ENCODE measurements at regions of chr2 and their contacts with region 1.

Region 1: DNA sequence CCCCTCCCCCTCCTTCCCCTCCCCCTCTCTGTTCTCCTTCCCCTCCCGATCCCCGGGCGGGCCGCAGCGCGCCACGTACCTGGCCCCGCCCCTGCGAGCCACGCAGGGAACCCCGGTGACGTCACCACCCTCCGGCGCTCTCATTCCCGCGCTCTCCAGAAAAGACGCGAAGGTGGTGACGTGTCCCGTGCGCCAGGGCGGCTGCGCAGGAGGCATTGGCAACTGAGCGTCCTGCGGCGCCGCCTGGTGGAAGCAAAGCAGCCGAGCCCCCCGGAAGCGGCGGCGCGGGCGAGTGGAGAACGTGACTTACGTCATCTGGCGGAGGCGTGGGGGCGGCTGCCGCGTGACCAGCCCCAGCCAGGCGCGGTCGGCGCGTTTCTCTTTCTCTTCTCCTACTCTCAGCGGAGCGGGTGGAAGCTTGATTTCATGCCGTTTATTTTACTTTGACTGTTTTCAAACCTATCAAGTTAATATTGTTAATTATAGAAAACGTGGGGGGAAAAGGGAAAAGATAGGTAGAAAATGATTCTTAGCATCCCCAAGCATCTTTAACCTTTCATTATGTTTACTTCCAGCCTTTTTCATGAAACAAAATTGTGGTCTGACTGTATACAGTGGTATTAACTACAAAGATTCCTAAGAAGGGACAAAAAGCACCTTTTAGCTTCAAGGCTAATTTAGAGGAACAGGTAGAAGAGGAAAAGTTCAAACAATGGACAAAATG is 48.1 kb downstream of the C2orf42 start:
- DNase-seq: peak; percentile 100
- H3K4me3 Mint-ChIP-seq: peak overlapping the region; percentile 80
- H3K27ac Mint-ChIP-seq: peak overlapping the region; percentile 91
- H3K4me1 Mint-ChIP-seq: peaks cover 58% of the 10 kb centered on the region
- H3K27me3 Mint-ChIP-seq: no peaks in the 10 kb centered on the region

Region 2: GRCh38 chr2:69816923-69817542 is 325.7 kb before region 1 on chr2:
- intact Hi-C with region 1: loop called (anchors 1 kb)
- DNase-seq: peak; percentile 68
- H3K4me3 Mint-ChIP-seq: no peak overlapping the region
- H3K27ac Mint-ChIP-seq: no peak overlapping the region
- H3K4me1 Mint-ChIP-seq: peaks cover 13% of the 10 kb centered on the region
- H3K27me3 Mint-ChIP-seq: no peaks in the 10 kb centered on the region

Region 3: GRCh38 chr2:69946351-69947077 is 196.2 kb before region 1 on chr2:
- intact Hi-C with region 1: loop called (anchors 1 kb)
- DNase-seq: peak; percentile 66
- H3K4me3 Mint-ChIP-seq: peak overlapping the region; percentile 67
- H3K27ac Mint-ChIP-seq: peak overlapping the region; percentile 86
- H3K4me1 Mint-ChIP-seq: peaks cover 52% of the 10 kb centered on the region
- H3K27me3 Mint-ChIP-seq: peaks cover 5% of the 10 kb centered on the region

Region 4: GRCh38 chr2:70086838-70087701 is 55.7 kb before region 1 on chr2 and contains the start of gene PCBP1:
- intact Hi-C with region 1: loop called (anchors 1 kb)
- DNase-seq: peak; percentile 91
- H3K4me3 Mint-ChIP-seq: peak within 1 kb of the TSS; percentile 99
- H3K27ac Mint-ChIP-seq: peak within 1 kb of the TSS; percentile 100
- H3K4me1 Mint-ChIP-seq: peaks cover 56% of the 10 kb centered on the region
- H3K27me3 Mint-ChIP-seq: no peaks in the 10 kb centered on the region
- total RNA-seq, gene PCBP1: 426 and 427 TPM in 2 replicates

Region 5: DNA sequence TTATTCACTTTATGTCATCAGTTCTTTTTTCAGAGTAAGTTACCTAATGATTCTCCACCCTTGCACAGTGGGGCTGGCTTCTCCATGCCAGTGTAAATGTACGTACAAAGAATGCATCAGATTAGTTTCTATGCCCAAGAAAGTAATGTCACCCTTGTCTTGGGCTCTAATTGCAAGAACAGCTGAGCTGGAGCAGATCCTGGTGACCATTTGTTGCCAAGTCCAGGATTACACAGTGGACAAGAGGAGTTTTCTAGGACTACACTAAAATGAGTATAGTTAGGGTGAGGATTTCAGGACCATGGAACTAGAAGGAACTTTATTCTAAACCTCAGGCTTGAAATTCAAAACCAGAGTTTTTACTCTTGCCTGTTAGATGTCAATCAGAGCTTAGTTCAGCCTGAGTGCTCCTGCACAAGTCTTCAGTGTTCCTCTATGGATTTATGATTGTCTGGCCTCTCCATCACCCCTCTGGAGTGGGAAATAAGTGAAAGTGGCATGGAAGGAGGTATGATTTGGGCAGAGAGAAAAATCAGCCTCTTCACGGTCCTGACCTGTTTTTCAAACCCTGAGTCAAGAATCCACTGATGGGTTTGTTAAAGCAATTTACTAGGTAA is 25.7 kb before region 1 on chr2:
- intact Hi-C with region 1: no loop called
- DNase-seq: no peak
- H3K4me3 Mint-ChIP-seq: no peak overlapping the region
- H3K27ac Mint-ChIP-seq: no peak overlapping the region
- H3K4me1 Mint-ChIP-seq: peaks cover 37% of the 10 kb centered on the region
- H3K27me3 Mint-ChIP-seq: no peaks in the 10 kb centered on the region

Region 6: DNA sequence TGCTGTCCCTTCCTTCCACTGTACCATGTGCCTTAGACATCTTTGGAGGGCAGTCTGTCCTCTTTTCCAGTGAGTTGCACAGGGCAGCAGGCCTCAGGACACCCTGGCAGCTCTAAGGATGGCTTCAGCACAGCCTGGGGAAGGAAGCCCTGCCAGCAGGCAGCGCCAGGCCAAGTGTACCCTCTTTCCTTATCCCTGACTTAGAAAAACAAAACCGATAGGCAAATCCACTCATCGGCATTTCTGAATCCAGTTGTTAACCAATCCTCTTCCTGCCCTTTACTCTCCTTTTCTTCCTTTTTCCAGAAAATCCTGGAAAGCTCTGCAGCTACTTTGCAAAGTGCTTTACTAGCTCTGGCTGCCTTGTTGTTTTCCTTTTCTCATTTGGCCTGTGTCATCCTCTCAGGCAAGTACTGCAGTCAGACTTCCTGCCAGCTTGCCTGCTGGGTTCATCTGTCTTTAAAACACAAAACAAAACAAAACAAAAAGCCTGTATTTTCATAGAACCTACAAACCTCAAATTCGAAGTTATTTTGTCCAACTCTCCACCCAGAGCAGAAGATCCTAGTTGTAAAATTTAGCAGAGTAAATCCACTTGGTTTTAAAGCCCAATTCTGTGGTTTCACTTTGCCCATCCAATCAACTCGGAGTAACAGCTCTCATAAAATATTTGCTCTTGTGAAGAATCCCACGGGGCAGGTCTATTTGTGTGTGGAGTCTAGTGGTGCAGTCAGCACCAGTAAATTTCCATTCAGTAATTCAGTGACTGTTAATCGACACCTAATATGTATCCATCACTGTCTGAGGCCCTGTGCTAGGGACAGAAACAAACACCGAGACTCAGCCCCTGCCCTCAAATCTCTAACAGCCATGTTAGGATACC is 10.3 kb before region 1 on chr2:
- intact Hi-C with region 1: loop called (anchors 1 kb)
- DNase-seq: peak; percentile 37
- H3K4me3 Mint-ChIP-seq: peak overlapping the region; percentile 84
- H3K27ac Mint-ChIP-seq: peak overlapping the region; percentile 98
- H3K4me1 Mint-ChIP-seq: peaks cover 67% of the 10 kb centered on the region
- H3K27me3 Mint-ChIP-seq: no peaks in the 10 kb centered on the region

Region 7: DNA sequence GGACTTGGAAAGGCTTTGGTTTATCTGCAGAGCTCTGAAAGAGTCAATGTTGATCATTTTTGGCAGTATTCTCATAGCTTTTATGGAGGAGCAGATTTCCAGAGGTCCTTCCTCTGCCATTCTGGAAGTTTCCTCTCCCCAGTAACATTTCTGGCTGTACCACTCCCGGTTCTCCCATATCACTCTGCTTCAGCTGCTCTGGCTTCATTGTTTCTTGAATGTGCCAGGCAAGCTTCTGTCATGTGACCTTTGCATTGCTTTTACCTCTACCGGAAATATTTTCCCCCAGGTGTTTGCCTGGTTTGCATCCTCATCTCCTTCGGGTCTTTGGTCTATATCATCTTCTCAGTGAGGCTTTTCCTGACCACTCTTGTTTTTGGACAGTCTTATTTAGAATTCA is 127.6 kb after region 1 on chr2:
- intact Hi-C with region 1: no loop called
- DNase-seq: no peak
- H3K4me3 Mint-ChIP-seq: no peak overlapping the region
- H3K27ac Mint-ChIP-seq: no peak overlapping the region
- H3K4me1 Mint-ChIP-seq: peaks cover 9% of the 10 kb centered on the region
- H3K27me3 Mint-ChIP-seq: no peaks in the 10 kb centered on the region